ENCODE measurements at regions of chr1 and their contacts with region 1.

Region 1: DNA sequence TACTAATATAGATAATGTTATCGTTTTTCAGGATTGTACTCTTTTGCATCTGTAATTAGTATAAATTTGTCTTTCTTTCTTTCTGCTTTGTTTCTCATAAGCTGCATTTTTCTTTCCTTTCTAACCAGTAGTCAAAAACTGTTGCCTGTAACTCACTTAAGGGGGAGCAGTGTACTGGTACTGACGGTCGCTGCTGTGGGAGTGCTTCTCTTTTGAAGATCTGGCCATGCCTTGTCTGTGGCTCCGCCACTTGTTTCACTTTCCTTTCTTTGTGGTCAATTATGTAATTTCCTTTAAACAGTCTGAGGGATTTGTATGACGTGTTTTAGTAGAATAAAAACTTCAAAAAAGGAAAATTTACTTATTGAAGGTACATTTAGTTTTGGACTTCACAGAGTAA is 37.0 kb downstream of the MIA3 start:
- DNase-seq: peak; percentile 73
- H3K4me3 Mint-ChIP-seq: peak overlapping the region; percentile 5
- H3K27ac Mint-ChIP-seq: peak overlapping the region; percentile 61
- H3K4me1 Mint-ChIP-seq: peaks cover 59% of the 10 kb centered on the region
- H3K27me3 Mint-ChIP-seq: no peaks in the 10 kb centered on the region

Region 2: GRCh38 chr1:222617367-222617951 is 37.4 kb before region 1 on chr1:
- intact Hi-C with region 1: loop called (anchors 1 kb)
- DNase-seq: peak; percentile 86
- H3K4me3 Mint-ChIP-seq: peak overlapping the region; percentile 82
- H3K27ac Mint-ChIP-seq: peak overlapping the region; percentile 92
- H3K4me1 Mint-ChIP-seq: peaks cover 34% of the 10 kb centered on the region
- H3K27me3 Mint-ChIP-seq: peaks cover 26% of the 10 kb centered on the region

Region 3: GRCh38 chr1:222713091-222713961 is 58.5 kb after region 1 on chr1:
- intact Hi-C with region 1: loop called (anchors 1 kb)
- DNase-seq: peak; percentile 85
- H3K4me3 Mint-ChIP-seq: peak overlapping the region; percentile 94
- H3K27ac Mint-ChIP-seq: peak overlapping the region; percentile 99
- H3K4me1 Mint-ChIP-seq: peaks cover 57% of the 10 kb centered on the region
- H3K27me3 Mint-ChIP-seq: no peaks in the 10 kb centered on the region

Region 4: DNA sequence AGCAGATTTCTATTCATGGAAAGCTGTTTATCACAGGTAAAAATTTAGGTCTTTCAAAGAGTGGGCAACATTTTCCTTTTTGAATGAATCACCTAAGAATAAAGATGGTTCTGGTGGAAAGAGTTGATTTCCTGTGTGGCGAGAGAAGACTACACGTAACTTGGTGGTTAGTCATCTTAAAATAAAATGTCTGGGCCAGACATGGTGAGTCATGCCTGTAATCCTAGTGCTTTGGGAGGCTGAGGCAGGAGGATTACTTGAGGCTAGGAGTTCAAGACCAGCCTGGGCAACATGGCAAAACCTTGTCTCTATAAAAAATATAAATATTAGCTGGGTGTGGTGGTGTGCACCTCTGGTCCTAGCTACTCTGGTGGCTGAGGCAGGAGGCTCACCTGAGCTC is 225.7 kb after region 1 on chr1:
- intact Hi-C with region 1: loop called (anchors 5 kb)
- DNase-seq: no peak
- H3K4me3 Mint-ChIP-seq: no peak overlapping the region
- H3K27ac Mint-ChIP-seq: peak overlapping the region; percentile 40
- H3K4me1 Mint-ChIP-seq: peaks cover 10% of the 10 kb centered on the region
- H3K27me3 Mint-ChIP-seq: no peaks in the 10 kb centered on the region

Region 5: GRCh38 chr1:223081181-223081994 is 426.5 kb after region 1 on chr1:
- intact Hi-C with region 1: loop called (anchors 10 kb)
- DNase-seq: peak; percentile 45
- H3K4me3 Mint-ChIP-seq: peak overlapping the region; percentile 24
- H3K27ac Mint-ChIP-seq: peak overlapping the region; percentile 6
- H3K4me1 Mint-ChIP-seq: no peaks in the 10 kb centered on the region
- H3K27me3 Mint-ChIP-seq: peaks cover 4% of the 10 kb centered on the region

Measured in activated T-helper 1 cell treated with anti-CD3 and anti-CD28 coated beads, Interleukin-12 subunit alpha, Interleukin-12 subunit beta, Interleukin-2, Interleukin-4 antibody, amounts not matched to agents 30 ng/mL and 10 ng/mL and 1 ng/mL, durations not matched to agents 14 hours and 24 hours and 36 hours (primary cell).